Naive thymus-derived CD8-positive, alpha-beta T cell (primary cell): ENCODE measurements at regions of chr10 and their contacts with region 1.

Region 1: DNA sequence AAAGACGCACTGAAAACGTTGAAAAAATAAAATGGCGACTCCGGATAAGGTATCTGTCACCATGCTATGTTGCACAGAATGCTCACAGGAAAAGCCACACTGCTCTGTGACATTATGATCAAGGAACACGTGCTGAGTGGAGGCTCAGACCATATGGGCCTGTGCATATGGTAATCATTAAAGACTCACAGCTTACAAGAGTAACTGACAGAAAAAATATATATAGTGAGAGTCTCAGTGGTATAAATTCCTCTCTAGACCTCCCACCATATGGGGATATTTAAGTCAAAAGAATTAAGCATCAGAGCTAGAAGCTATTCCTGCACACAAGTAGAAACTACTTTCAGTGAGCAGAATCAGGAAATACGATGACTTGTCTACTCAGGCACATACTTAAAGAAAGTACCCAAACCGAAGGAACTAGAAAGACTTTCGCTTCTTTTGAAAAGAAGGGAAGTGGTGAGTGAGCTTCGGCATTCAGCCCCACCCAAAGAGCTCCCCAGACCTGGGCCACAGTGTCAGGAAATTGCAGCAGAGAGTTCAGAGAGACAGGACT is 65.1 kb upstream of the MPP7 start:
- DNase-seq: peak; percentile 19 to 87 (median 66)
- ATAC-seq: peak; percentile 93
- H3K4me3 Mint-ChIP-seq: peak overlapping the region; percentile 61 to 86 (median 82)
- H3K27ac Mint-ChIP-seq: peak overlapping the region; percentile 88 to 99 (median 98)
- H3K4me1 Mint-ChIP-seq: peaks cover 22 to 62% (median 59%) of the 10 kb centered on the region in 4 donors
- H3K27me3 Mint-ChIP-seq: no peaks in the 10 kb centered on the region

Region 2: DNA sequence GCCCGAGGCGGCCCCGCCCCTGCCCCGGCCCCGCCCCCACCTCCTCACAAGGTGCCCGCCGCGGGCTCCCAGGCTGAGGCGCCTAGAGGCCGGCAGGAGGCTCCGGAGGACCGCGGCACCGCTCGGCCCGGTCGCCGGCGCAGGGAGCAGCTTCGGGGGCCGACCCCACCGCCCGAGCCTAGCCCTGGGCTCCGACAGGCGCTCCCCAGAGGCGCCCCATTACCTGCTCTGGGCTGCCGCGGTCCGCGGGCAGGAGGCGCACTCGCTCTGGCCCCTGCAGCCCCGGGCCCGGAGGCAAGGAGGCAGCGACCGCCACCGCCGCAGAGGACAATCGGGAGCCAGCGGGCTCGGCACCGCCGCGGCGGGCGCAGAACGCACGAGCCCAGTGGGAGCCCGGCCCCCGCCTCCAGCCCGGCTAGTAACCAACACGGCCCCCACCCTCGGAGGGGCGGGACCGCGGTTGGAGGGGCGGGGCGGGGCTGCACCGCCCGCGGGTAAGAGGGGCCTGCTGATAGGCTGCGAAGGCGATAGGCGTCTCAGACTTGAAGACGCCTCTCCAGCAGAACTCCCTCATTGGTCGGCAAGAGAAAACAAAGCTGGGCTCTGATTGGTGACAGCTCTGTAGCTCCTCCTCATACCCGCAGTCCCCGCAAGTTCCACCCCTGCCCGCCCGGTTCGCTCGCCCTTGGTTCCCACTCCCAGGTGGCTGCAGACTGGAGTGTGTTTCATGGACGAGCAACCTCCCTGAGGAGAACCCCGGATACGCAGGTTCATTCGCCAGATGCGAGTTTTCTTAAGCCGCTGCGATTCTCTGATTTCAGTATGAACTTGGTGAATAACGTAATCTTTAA is 65.1 kb before region 1 on chr10 and contains the start of gene MPP7:
- POLR2A ChIA-PET with region 1: interaction called, 83 read pairs
- DNase-seq: peak; percentile 95 to 98 (median 97)
- ATAC-seq: peak; percentile 92 to 93
- H3K4me3 Mint-ChIP-seq: peak within 1 kb of the TSS; percentile 93 to 98 (median 96)
- H3K27ac Mint-ChIP-seq: peak within 1 kb of the TSS; percentile 78 to 99 (median 96)
- H3K4me1 Mint-ChIP-seq: peaks cover 30 to 76% (median 66%) of the 10 kb centered on the region in 4 donors
- H3K27me3 Mint-ChIP-seq: peaks cover 0 to 3% (median 0%) of the 10 kb centered on the region in 5 donors
- polyA plus RNA-seq, gene MPP7: 33.3 to 41.2 (median 40.3) TPM

Region 3: GRCh38 chr10:28326516-28327490 is 41.2 kb before region 1 on chr10:
- POLR2A ChIA-PET with region 1: interaction called, 199 read pairs
- DNase-seq: no peak
- ATAC-seq: peak in 1 of 2 donors; percentile 13
- H3K4me3 Mint-ChIP-seq: peak overlapping the region; percentile 4 to 79 (median 66)
- H3K27ac Mint-ChIP-seq: peak overlapping the region; percentile 3 to 85 (median 76)
- H3K4me1 Mint-ChIP-seq: peaks cover 36 to 80% (median 65%) of the 10 kb centered on the region in 4 donors
- H3K27me3 Mint-ChIP-seq: no peaks in the 10 kb centered on the region

Region 4: GRCh38 chr10:28381903-28382347 is 13.9 kb after region 1 on chr10:
- POLR2A ChIA-PET with region 1: interaction called, 51 read pairs
- DNase-seq: peak; percentile 68 to 90 (median 80)
- ATAC-seq: peak; percentile 83 to 95
- H3K4me3 Mint-ChIP-seq: peak overlapping the region in 4 of 10 donors; percentile 5 to 63 (median 16)
- H3K27ac Mint-ChIP-seq: peak overlapping the region in 8 of 10 donors; percentile 9 to 93 (median 68)
- H3K4me1 Mint-ChIP-seq: peaks cover 16 to 39% (median 32%) of the 10 kb centered on the region in 4 donors
- H3K27me3 Mint-ChIP-seq: peaks cover 0 to 6% (median 0%) of the 10 kb centered on the region in 5 donors